Breast epithelium (tissue), 4 donors: ENCODE measurements at regions of chr4 and their contacts with region 1.

Region 1: DNA sequence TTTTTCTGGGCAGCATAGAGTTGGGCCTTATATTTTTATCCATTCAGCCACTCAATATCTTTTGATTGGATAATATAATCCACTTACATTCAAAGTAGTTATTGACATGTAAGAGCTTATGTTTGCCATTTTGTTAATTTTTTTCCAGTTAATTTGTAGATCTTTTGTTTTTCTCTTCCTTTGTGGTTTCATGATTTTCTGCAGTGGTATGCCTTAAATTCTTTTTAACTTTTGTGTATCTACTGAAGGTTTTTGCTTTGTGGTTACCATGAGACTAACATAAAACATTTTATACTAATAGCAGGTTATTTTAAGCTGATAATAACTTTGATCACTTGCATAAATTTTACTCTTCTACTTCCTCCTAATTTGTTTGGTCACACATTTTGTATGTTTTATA is 140.8 kb upstream of the GATB start:
- DNase-seq: no peak
- H3K4me3 ChIP-seq: no peak overlapping the region
- H3K27ac ChIP-seq: no peak overlapping the region
- H3K4me1 ChIP-seq: no peaks in the 10 kb centered on the region
- H3K27me3 ChIP-seq: no peaks in the 10 kb centered on the region
- CTCF ChIP-seq: no peak
- POLR2A ChIP-seq: no peak

Region 2: GRCh38 chr4:151866592-151866918 is 35.1 kb before region 1 on chr4:
- intact Hi-C with region 1: no loop called
- DNase-seq: no peak
- H3K4me3 ChIP-seq: no peak overlapping the region
- H3K27ac ChIP-seq: no peak overlapping the region
- H3K4me1 ChIP-seq: no peaks in the 10 kb centered on the region
- H3K27me3 ChIP-seq: no peaks in the 10 kb centered on the region
- CTCF ChIP-seq: no peak
- POLR2A ChIP-seq: no peak

Region 3: DNA sequence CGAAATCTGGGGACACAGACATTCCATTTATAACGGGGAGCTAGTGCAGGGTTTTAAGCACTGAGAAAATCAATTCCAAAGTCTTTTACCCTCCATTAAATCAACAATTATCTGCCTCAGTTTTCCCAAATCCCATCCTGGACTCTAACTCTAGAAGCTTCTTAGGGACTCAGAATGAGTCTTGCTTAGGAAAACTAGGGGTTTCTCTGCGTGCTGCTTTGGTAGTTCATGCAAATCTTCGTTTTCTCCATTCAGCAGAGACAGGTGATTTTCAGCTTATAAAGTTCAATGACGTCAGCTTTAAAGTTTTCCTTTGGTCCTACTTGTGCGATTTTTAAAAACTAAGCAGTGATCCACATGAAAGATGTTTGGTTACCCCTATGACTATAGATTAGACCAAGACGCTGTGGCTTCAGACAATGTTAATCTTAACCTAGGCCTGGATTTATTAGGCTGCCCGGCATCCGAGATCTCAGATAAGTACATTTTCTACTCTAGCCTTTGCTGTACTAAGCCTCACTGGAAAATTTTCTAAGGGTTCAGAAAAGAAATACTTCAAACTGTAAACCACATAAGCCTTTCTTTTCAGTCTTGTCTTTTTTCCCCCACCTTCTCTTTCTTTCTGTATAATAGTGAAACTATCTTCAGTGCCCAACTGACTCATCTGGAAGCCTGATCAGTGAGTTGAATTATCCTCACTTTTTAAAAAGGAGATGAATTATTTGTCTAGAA is 19.4 kb before region 1 on chr4:
- intact Hi-C with region 1: loop called (anchors 1 kb)
- DNase-seq: no peak
- H3K4me3 ChIP-seq: no peak overlapping the region
- H3K27ac ChIP-seq: no peak overlapping the region
- H3K4me1 ChIP-seq: no peaks in the 10 kb centered on the region
- H3K27me3 ChIP-seq: no peaks in the 10 kb centered on the region
- CTCF ChIP-seq: no peak
- POLR2A ChIP-seq: no peak

Region 4: DNA sequence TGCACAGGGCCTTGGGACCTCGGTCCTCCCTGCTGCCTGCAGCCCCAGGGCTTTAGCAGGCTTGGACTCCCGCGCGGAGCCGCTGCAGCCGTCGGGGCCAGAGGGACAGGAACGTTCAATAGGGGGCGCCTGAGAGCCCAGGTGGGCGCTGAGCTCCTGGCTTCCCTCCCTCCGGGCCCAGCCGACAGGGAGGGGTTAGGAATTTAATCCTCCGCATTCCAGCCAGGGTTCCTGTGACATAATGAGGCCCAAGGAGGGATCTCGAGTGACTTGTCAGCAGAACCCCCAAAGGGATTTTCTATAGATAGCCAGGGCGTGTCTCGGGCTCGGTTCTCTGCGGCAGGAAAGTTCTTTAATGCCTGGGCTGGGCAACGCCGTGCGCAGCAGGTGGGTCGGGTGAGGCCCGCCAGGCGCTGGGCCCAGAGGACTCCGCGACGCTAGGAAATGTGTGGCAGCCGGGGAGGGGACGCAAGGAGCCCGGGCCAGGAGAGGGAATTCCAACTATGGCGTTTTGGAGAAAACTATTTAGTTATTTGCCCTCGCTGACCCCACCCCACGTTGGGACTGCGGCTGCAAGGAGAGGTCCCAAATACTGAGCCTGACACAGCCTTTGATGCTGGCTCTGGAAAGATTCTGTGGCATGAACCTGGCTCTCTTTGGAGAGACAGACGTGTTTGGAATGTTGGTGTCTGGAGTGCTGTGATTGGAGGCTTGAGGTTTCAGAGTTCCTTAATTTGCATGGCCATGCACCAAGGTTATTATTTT is 144.4 kb after region 1 on chr4:
- intact Hi-C with region 1: no loop called
- DNase-seq: no peak
- H3K4me3 ChIP-seq: peak overlapping the region in 2 of 3 donors; percentile 30 to 48
- H3K27ac ChIP-seq: no peak overlapping the region
- H3K4me1 ChIP-seq: no peaks in the 10 kb centered on the region
- H3K27me3 ChIP-seq: no peaks in the 10 kb centered on the region
- CTCF ChIP-seq: peak in 2 of 3 donors; percentile 9 to 12
- POLR2A ChIP-seq: no peak